ENCODE measurements at regions of chr11 and their contacts with region 1.

Region 1: DNA sequence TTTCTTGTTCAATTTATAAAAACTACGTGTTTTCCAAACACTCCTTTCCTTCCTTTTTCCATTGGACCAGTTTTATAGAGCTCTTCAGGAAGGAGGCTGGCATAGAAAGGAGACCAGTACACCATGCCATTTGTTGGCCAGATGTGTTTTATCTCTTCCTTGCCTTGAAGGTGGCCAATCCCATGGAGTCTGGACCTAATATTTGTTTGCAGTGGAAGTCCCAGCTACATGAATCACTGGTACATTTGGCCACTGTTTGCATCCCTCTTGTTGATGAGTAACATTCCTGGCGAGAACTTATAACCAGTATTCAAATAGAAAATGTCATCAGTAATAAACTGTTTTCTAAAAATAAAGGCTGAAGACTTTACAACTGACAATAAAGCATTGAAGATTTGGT is 110.2 kb downstream of the ANO3 start:
- DNase-seq: no peak
- H3K4me3 ChIP-seq: no peak overlapping the region
- H3K4me3 Mint-ChIP-seq: no peak overlapping the region
- H3K27ac ChIP-seq: no peak overlapping the region
- H3K27ac Mint-ChIP-seq: no peak overlapping the region
- H3K4me1 ChIP-seq: no peaks in the 10 kb centered on the region
- H3K4me1 Mint-ChIP-seq: no peaks in the 10 kb centered on the region
- H3K27me3 ChIP-seq: no peaks in the 10 kb centered on the region
- H3K27me3 Mint-ChIP-seq: no peaks in the 10 kb centered on the region
- CTCF ChIP-seq: no peak

Region 2: GRCh38 chr11:26507229-26507628 is 65.1 kb after region 1 on chr11:
- intact Hi-C with region 1: loop called in 1 of 2 experiments (anchors 10 kb)
- DNase-seq: no peak
- H3K4me3 ChIP-seq: no peak overlapping the region
- H3K4me3 Mint-ChIP-seq: no peak overlapping the region
- H3K27ac ChIP-seq: no peak overlapping the region
- H3K27ac Mint-ChIP-seq: no peak overlapping the region
- H3K4me1 ChIP-seq: no peaks in the 10 kb centered on the region
- H3K4me1 Mint-ChIP-seq: no peaks in the 10 kb centered on the region
- H3K27me3 ChIP-seq: no peaks in the 10 kb centered on the region
- H3K27me3 Mint-ChIP-seq: peaks cover 0 to 1% (median 0%) of the 10 kb centered on the region in 3 donors
- CTCF ChIP-seq: no peak